PC-3 (cell line): ENCODE measurements at regions of chr1 and their contacts with region 1.

Region 1: GRCh38 chr1:6489799-6490180 is 1.7 kb downstream of the PLEKHG5 start:
- DNase-seq: peak; percentile 91
- ATAC-seq: peak; percentile 41
- H3K4me3 ChIP-seq: peak overlapping the region; percentile 89
- H3K27ac ChIP-seq: peak overlapping the region; percentile 97
- H3K4me1 ChIP-seq: peaks cover 51% of the 10 kb centered on the region
- H3K27me3 ChIP-seq: no peaks in the 10 kb centered on the region
- CTCF ChIP-seq: peak; percentile 99

Region 2: DNA sequence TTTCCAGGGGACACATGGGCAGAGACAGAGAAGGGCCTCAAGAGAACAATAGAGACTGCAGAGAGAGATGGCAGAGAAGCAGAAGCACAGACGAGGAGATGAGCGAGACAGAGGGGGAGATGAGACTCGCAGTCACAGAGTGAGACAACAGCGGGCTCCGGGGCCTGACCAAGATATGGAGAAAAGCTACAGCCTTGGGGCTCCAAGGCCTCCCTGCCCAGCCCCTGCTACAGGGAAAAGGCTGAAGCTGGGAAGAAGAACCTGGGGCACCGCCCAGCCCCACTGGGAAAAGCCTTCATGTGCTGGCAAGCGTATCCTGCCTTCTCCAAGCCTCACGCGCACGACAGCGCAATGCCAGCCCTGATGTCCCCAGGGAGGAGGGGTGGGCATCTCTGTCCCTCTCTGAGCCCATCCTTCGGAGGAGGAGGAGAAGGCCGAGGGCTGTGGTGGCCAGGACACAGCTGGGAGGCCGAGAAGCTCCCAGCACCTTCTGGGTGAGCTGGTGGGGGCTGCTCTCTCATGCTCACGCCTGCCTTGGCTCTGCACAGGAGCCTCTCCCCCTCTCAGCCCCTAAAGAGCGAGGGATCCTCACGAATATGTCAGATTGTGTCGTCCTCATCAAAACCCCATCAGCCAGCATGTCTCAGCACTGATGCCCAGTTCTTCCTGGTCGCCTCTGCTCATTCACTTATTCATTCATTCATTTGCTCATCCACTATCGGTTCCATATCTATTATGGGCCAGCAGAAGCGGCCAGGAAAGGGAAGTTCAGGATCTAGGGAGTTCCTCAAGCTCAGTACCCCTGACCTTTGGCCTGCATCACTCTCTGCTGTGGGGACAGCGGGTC is 152.8 kb before region 1 on chr1:
- CTCF ChIA-PET with region 1: interaction called, 19 read pairs
- POLR2A ChIA-PET with region 1: no interaction called
- intact Hi-C with region 1: no loop called
- DNase-seq: no peak
- ATAC-seq: no peak
- H3K4me3 ChIP-seq: no peak overlapping the region
- H3K27ac ChIP-seq: no peak overlapping the region
- H3K4me1 ChIP-seq: no peaks in the 10 kb centered on the region
- H3K27me3 ChIP-seq: no peaks in the 10 kb centered on the region
- CTCF ChIP-seq: no peak

Region 3: DNA sequence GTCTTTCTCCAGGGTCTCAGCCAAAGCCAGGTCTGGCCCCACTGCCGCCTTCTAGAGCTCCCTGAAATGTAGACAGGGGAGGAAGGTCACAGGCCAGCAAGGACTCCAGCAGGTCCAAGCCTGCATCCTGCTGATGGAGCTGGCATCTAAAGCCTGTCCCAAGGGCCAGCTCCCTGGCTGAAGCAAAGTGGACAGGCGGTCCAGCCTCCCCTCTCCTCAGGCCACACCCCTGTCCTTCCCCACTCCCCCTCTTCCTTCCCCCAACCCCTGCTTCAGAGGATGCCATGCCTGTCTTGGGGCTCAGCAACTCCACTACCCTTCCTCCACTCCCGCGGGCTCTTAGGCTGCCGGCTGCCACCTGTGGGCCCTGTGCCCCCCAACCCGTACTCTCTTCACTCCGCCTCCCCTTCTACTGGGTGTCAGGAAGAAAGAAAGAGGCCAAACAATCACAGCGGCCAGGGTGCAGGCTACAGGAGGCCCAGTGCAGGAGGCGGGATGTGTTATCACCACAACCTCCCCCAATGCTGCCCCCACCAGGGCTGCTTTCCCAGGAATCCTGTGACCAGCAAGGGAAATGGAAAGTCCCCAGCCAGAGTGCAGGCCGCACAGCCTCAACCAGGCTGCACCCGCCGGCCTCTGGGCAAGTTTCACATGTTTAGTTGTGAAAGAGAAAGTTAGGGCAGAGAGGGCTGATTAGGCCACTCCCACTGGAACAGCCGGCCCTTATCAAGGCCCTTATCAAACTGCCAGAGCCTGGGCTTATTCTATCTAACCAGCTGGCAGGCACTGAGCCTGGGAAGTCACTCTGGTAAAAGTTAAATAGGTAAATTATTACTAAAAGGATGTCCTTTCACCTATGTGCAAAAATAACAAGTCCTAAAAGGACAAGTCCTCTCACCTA is 130.3 kb before region 1 on chr1:
- CTCF ChIA-PET with region 1: no interaction called
- POLR2A ChIA-PET with region 1: no interaction called
- intact Hi-C with region 1: no loop called
- DNase-seq: no peak
- ATAC-seq: no peak
- H3K4me3 ChIP-seq: no peak overlapping the region
- H3K27ac ChIP-seq: no peak overlapping the region
- H3K4me1 ChIP-seq: peaks cover under 1% of the 10 kb centered on the region; the same call in 1 of the 2 replicates
- H3K27me3 ChIP-seq: no peaks in the 10 kb centered on the region
- CTCF ChIP-seq: no peak

Region 4: DNA sequence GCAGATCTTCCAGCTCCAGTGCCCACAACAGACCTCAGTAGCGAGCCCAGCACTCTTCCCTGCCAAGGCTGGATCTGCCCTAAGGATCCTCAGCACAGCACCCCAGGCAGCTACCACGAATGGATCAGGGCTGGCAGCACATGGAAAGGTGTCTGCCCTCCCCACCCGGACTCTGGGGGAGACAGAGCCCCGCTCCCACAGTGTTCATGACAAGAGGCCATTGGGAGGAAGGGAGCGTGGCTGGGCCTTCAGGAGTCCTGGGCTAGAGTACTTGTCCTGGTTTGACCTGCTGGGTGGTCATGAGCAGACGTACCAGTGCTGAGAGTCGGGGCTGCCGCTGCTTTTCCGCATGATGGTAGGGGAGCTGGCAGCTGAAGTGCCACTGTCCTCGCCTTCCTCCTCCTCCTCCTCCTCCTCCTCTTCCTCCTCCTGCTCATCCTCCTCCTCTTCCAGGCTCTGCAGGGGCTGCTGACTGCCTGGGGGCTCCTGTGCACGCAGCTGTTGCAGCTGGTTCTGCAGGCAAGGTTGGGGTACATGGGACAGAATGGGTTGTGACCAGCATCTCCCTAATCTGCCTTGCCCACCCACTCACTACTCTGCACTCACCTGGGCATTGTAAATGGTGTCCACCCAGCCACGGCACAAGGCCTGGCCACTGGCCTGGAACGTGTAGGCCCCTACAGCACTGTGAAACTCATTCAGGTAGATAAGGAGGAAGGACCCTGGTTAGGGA is 20.9 kb before region 1 on chr1:
- CTCF ChIA-PET with region 1: no interaction called
- POLR2A ChIA-PET with region 1: no interaction called
- intact Hi-C with region 1: no loop called
- DNase-seq: no peak
- ATAC-seq: no peak
- H3K4me3 ChIP-seq: no peak overlapping the region
- H3K27ac ChIP-seq: no peak overlapping the region
- H3K4me1 ChIP-seq: no peaks in the 10 kb centered on the region
- H3K27me3 ChIP-seq: no peaks in the 10 kb centered on the region
- CTCF ChIP-seq: no peak

Region 5: GRCh38 chr1:6538956-6539355 is 49.2 kb after region 1 on chr1:
- CTCF ChIA-PET with region 1: no interaction called
- POLR2A ChIA-PET with region 1: interaction called, 15 read pairs
- intact Hi-C with region 1: no loop called
- DNase-seq: no peak
- ATAC-seq: peak; percentile 22; the same call in 1 of the 2 replicates
- H3K4me3 ChIP-seq: no peak overlapping the region
- H3K27ac ChIP-seq: no peak overlapping the region
- H3K4me1 ChIP-seq: no peaks in the 10 kb centered on the region
- H3K27me3 ChIP-seq: no peaks in the 10 kb centered on the region
- CTCF ChIP-seq: no peak

Region 6: GRCh38 chr1:6579374-6580118 is 89.8 kb after region 1 on chr1 and contains the start of gene ZBTB48:
- CTCF ChIA-PET with region 1: no interaction called
- POLR2A ChIA-PET with region 1: no interaction called
- intact Hi-C with region 1: no loop called
- DNase-seq: peak; percentile 100
- ATAC-seq: peak; percentile 96
- H3K4me3 ChIP-seq: peak within 1 kb of the TSS; percentile 92
- H3K27ac ChIP-seq: 0 out of 2 replicates have a peak within 1 kb of the TSS, but pooled peaks have one; percentile 11
- H3K4me1 ChIP-seq: peaks cover 27% of the 10 kb centered on the region
- H3K27me3 ChIP-seq: no peaks in the 10 kb centered on the region
- CTCF ChIP-seq: no peak
- total RNA-seq, gene ZBTB48: 42.7 and 47.2 TPM in 2 replicates

Region 7: GRCh38 chr1:6602669-6603237 is 113.0 kb after region 1 on chr1 and contains the start of gene KLHL21:
- CTCF ChIA-PET with region 1: no interaction called
- POLR2A ChIA-PET with region 1: interaction called, 3 read pairs
- intact Hi-C with region 1: loop called (anchors 1 kb)
- DNase-seq: peak; percentile 97
- ATAC-seq: peak; percentile 54
- H3K4me3 ChIP-seq: peak within 1 kb of the TSS; percentile 86
- H3K27ac ChIP-seq: peak within 1 kb of the TSS; percentile 93
- H3K4me1 ChIP-seq: peaks cover 30% of the 10 kb centered on the region
- H3K27me3 ChIP-seq: no peaks in the 10 kb centered on the region
- CTCF ChIP-seq: no peak
- total RNA-seq, gene KLHL21: 82.5 and 105 TPM in 2 replicates

Region 8: GRCh38 chr1:6646499-6647148 is 156.8 kb after region 1 on chr1:
- CTCF ChIA-PET with region 1: no interaction called
- POLR2A ChIA-PET with region 1: no interaction called
- intact Hi-C with region 1: loop called (anchors 1 kb)
- DNase-seq: peak; percentile 68
- ATAC-seq: peak; percentile 53
- H3K4me3 ChIP-seq: no peak overlapping the region
- H3K27ac ChIP-seq: no peak overlapping the region
- H3K4me1 ChIP-seq: no peaks in the 10 kb centered on the region
- H3K27me3 ChIP-seq: no peaks in the 10 kb centered on the region
- CTCF ChIP-seq: peak; percentile 90